ENCODE measurements at regions of chr5 and their contacts with region 1.

Region 1: GRCh38 chr5:136080483-136081216 is 51.9 kb downstream of the TGFBI start:
- DNase-seq: peak; percentile 94
- ATAC-seq: peak; percentile 96

Region 2: DNA sequence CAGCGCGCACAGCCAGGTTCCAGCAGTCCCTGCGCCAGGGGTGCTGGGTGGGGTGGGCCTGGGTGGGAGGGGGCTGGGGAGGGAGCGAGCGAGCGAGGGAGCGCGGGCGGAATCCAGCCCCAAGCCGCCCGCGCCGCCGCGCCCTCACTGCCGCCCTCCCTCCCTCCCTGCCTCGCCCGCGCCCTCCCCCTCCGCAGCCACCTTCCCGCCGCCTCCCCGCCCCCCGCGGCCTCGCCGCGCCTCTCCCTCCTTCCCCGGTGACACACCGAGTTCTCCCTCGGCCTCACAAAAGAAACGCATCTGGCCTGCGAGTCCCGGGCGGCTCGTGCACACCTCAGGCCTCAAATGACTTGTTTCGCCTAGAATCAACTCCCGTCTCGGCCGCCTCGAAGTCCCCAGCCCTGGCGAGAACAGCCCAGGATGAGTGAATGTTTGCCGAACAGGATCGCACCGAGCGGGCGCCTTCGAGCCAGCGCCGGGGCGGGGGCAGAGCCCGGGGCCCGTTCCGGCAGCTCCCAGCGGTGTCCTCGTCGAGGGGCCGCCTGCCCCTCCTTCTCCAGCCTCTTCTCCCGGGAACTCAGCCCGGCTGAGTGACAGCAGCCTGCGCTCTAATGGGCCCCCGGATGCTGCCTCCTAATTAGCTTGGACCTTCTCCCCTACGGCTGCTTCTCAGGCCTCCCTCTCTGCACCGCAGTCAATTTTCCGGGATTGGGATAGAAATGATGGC is 1046.3 kb before region 1 on chr5:
- intact Hi-C with region 1: no loop called
- DNase-seq: no peak
- ATAC-seq: peak; percentile 18

Region 3: DNA sequence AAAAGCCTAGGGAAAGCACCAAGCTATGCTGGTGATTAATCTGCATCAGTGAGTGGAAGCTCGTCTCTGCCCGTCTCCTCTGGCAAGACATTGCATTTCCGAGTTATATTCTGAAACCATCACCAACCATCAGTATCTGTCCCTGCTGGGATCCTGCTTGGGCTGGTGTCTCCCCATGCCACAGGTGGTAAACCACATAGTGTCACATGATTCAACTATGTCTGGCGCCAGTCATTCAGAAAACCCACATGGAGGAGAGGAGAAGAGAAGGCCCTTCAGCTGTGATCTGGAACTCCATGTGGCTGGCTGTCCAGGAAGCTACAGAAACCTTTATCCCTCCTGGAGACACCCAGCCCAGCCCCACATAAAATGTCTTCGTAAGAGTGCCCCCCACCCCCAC is 189.8 kb before region 1 on chr5:
- intact Hi-C with region 1: no loop called
- DNase-seq: no peak
- ATAC-seq: no peak

Region 4: GRCh38 chr5:136174021-136174659 is 93.5 kb after region 1 on chr5:
- intact Hi-C with region 1: loop called (anchors 10 kb)
- DNase-seq: no peak
- ATAC-seq: peak; percentile 57

Region 5: DNA sequence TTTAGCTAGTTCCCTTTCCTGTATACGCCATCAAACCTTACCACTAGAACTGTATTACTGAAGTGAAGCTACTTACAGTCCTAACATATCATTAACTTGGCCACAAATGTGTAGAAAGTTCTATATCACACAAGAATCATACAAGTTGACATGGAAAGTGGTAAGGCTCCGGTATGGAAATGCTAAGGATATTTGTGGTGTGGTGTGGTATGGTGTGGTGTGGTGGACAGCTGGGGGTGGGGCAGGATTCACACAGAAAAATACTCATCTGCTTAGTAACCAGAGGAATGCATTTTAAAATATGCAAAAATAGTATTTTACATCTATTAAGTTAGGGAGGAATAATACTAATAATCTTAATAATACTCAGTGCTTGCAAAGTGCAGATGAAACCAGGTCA is 215.3 kb after region 1 on chr5:
- intact Hi-C with region 1: no loop called
- DNase-seq: no peak
- ATAC-seq: no peak

Region 6: GRCh38 chr5:136511046-136511445 is 430.4 kb after region 1 on chr5:
- intact Hi-C with region 1: no loop called
- DNase-seq: no peak
- ATAC-seq: no peak

Measured in left ventricle myocardium superior (tissue), 1 donor.